Colonic mucosa (tissue), 4 donors: ENCODE measurements at regions of chr2 and their contacts with region 1.

Region 1: DNA sequence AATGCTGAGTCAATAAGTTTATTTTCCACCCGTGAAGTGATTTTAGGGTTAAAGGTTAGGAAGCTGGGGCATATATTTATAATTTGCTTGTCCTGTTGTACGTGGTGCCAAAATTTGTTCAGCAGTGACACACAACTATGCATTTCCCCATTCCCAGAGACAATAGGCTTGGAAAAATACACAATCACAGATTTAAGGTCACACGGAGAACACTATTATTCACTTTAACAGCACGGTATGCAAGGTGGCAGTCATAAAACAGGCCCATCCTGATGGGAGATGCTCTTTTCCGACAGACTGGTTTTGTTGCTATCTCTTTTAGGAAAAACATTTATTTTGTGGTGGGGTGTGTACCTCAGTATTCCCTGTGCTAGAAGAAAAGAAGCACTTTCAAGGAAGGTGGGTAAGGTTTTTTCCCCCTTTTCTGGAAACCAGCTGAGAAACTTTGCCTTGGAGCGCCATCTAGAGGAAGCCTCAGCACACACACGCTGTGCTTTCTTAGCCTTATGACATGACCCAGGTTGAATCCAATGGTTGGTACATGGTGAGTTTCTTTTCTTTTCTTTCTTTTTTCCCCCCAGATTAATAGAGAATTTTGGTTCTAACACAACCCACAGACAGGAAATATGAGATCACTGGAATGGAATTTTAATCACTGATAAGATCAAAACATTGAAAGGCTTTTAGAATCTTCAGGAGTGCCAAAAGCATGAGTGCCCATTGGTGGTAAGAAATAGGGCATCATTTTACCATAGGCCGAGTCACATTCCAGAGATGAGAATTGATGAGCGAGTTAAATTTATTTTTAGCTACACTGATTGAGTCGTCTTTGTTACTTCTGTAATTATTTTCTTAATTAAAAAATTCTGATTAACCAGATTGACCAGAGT is 332.1 kb downstream of the AGPS start:
- DNase-seq: peak; percentile 59
- H3K4me3 ChIP-seq: no peak overlapping the region
- H3K27ac ChIP-seq: no peak overlapping the region
- H3K4me1 ChIP-seq: no peaks in the 10 kb centered on the region
- H3K27me3 ChIP-seq: no peaks in the 10 kb centered on the region
- CTCF ChIP-seq: peak; percentile 84

Region 2: DNA sequence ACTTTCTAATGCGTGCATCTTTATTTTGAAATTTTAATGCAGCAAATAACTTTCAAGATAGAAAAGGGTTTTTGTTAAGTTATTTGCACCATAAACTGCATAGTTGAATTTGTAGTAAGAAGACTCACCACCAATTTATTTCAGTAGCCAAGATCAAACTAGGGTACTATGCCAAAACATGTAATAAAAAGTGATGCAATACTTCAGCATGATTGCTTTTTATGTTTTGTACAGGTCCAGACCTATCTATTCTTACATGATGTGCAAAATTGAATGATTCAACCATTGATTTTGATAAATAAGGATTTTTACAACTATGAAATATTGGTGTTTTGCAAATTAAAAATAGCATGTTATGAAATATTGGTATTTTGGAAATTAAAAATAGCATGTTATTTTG is 305.4 kb before region 1 on chr2:
- intact Hi-C with region 1: loop called (anchors 10 kb)
- DNase-seq: no peak
- H3K4me3 ChIP-seq: no peak overlapping the region
- H3K27ac ChIP-seq: no peak overlapping the region
- H3K4me1 ChIP-seq: no peaks in the 10 kb centered on the region
- H3K27me3 ChIP-seq: no peaks in the 10 kb centered on the region
- CTCF ChIP-seq: no peak

Region 3: DNA sequence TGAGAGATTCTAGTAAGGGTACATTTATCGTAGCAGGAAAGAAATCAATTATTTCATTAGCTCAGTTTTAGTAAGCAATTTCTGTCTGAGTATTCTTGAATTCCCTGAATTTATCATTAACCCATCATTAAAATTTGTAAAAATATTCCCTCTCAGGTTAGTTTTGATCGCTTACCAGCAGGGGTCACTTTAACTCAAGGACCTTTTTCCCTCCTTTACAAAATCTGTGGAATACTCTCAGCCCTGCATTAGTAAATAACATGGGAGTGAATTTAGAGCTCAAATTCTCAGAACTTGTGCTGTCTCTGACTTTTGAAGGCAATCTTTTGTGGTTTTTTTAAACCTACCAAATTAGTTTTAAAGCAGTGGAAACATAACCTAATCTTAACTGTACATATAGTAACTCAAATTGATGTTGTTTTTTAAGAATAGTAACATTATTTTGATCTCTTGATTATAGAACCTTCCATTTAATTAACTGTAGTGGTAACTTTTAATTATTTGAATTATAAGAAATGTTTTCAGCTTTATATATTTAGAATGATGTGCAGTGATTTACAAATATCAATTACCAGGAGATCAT is 234.8 kb before region 1 on chr2:
- intact Hi-C with region 1: loop called (anchors 10 kb)
- DNase-seq: no peak
- H3K4me3 ChIP-seq: no peak overlapping the region
- H3K27ac ChIP-seq: no peak overlapping the region
- H3K4me1 ChIP-seq: no peaks in the 10 kb centered on the region
- H3K27me3 ChIP-seq: no peaks in the 10 kb centered on the region
- CTCF ChIP-seq: peak; percentile 31